ENCODE measurements at regions of chr12 and their contacts with region 1.

Region 1: DNA sequence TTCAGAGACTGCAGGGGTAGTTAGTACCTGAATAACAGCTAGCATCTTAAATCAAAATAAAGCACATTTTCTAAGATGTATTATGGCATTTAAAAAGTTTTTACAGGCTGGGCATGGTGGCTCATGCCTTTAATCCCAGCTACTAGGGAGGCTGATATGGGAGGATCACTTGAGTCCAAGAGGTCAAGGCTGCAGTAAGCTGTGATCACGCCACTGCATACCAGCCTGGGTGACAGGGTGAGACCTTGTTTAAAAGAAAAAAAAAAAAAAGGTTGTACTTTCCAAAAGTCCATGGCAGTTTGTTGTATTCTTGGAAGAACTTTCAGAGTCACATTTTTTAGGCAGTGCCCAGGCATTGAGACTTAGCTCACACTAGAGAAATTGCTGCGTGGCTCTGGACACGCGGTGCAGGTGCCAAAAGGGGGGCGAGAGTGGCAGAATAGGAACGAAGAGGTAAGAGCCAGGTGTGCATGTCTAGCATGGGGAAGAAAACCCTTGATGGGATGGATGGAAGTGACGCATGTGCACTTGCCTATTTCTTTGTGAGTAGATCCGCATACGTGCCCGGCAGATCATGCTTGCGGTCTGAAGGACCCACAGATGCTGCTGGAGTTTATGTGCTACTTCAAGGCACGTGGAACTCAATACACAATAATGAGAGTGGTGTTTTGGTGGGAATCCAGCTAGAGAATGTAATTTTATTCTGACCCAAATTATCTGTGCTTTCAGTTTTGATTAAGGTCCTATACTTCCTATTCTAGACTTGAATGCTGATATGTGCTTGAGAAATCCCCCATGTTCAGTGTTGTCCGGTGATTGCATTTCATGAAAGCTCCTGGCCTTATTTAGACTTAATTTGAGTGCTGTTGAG is 11.9 kb downstream of the ANKRD13A start:
- DNase-seq: no peak
- ATAC-seq: no peak
- H3K4me3 Mint-ChIP-seq: no peak overlapping the region
- H3K27ac Mint-ChIP-seq: peak overlapping the region; percentile 64
- H3K4me1 Mint-ChIP-seq: peaks cover 78% of the 10 kb centered on the region
- H3K27me3 Mint-ChIP-seq: no peaks in the 10 kb centered on the region

Region 2: DNA sequence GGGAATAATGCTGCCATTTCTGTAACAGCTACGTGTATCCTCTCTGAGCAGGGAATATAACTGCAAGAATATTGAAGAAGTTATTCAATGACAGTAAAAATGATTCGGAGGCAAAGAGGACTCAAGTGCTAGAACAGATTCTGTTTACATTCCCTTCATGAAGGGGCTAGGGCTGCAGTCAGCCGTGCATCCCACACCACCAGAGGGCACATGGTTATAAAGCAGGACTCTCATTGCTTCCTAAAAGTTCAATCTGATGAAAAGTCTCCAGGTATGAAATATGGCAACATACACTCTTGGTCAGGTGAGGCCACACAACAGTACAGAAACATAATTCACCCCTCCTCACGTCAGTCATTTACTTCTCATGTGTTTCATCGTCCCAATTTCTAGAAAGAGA is 77.1 kb before region 1 on chr12:
- CTCF ChIA-PET with region 1: no interaction called
- POLR2A ChIA-PET with region 1: no interaction called
- intact Hi-C with region 1: loop called in 1 of 2 experiments (anchors 2 kb)
- DNase-seq: peak; percentile 59
- ATAC-seq: peak; percentile 58
- H3K4me3 Mint-ChIP-seq: no peak overlapping the region
- H3K27ac Mint-ChIP-seq: peak overlapping the region; percentile 67
- H3K4me1 Mint-ChIP-seq: no peaks in the 10 kb centered on the region
- H3K27me3 Mint-ChIP-seq: no peaks in the 10 kb centered on the region

Region 3: DNA sequence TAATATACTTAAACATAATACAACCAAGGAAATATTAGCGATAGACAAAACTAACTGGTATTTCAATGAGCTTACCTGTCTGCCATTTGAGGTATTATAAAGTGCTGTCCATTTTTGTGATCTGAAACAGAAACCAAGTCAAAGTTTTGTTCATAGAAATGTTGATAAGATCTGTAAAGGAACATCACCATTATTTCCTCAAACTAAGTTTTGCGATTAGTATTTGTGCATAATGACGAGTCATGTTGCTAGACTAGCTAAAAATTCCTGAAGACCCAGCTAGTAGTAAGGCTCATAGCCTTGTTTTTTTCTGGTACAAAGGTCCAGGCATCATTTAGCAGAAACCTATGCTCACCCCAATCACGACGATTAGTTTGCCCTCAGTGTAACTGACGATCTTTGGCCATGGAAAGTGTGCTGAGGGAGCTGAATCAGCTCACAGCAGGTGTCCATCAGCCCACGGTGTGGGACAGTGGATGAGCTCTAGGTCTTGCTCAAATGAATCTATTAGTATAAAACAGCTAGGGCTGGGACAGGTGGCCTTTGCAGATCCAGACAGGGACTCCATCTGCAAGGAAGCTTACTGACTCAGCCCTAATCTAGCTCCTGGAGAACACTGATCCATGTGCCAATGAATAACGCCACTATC is 43.6 kb before region 1 on chr12:
- CTCF ChIA-PET with region 1: interaction called, 3 read pairs
- POLR2A ChIA-PET with region 1: interaction called, 11 read pairs
- intact Hi-C with region 1: loop called in 1 of 2 experiments (anchors 5 kb)
- DNase-seq: no peak
- ATAC-seq: peak; percentile 66
- H3K4me3 Mint-ChIP-seq: no peak overlapping the region
- H3K27ac Mint-ChIP-seq: peak overlapping the region; percentile 58
- H3K4me1 Mint-ChIP-seq: peaks cover 12% of the 10 kb centered on the region
- H3K27me3 Mint-ChIP-seq: no peaks in the 10 kb centered on the region

Measured in activated CD4-positive, alpha-beta T cell treated with anti-CD3 and anti-CD28 coated beads for 36 hours (primary cell).